HEK293 (cell line): ENCODE measurements at regions of chr16 and their contacts with region 1.

Region 1: DNA sequence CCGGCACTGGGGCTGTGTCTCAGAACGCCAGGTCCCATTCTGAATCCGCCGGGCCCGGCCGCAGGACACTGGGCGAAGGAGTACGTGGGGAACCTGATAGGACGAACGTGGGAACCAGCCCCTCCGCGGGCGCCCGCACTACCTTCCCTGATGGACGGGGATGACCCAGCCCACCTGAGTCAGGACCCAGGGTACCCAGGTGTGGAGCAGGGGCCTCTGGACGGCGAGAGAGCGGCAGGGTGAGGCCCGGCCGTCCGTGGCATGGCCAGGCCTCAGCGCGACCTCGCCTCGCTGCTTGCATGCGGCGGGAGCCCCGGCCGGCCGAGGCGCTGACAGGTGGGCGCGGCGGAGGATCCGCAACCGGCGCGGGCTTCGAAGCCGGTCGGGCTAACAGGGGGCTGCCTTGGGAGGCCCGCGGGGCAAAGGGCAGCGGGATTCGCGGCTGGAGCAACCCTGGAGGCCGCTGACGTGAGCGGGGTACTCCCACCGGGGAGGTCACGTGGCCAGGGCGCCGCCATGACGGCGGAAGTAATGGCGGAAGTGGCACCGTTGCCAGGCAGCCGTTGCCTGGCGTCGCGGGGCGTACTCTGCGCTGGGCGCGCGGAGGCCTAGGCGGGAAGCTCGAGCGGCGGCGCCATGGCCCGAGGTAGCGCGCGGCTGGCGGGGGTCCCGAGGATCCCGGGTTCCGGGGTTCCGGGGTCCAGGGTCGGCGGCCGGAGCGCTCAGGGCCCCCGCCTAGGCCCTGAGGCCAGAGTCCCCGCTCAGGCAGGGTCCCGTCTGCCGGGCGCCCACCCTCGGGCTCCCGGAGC is at the start of gene WDR90:
- H3K4me3 ChIP-seq: peak within 1 kb of the TSS; percentile 37
- H3K27ac ChIP-seq: peak within 1 kb of the TSS; percentile 97
- H3K4me1 ChIP-seq: 0 out of 2 replicates have a peak, but pooled peaks cover 5% of the 10 kb centered on the region
- CTCF ChIP-seq: no peak

Region 2: GRCh38 chr16:636206-637080 is 12.5 kb before region 1 on chr16 and contains the start of gene METTL26:
- CTCF ChIA-PET with region 1: interaction called, 5 read pairs
- POLR2A ChIA-PET with region 1: interaction called, 10 read pairs
- H3K4me3 ChIP-seq: peak within 1 kb of the TSS; percentile 87
- H3K27ac ChIP-seq: peak within 1 kb of the TSS; percentile 82
- H3K4me1 ChIP-seq: peaks cover 5% of the 10 kb centered on the region; the same call in 1 of the 2 replicates
- CTCF ChIP-seq: peak; percentile 79

Region 3: DNA sequence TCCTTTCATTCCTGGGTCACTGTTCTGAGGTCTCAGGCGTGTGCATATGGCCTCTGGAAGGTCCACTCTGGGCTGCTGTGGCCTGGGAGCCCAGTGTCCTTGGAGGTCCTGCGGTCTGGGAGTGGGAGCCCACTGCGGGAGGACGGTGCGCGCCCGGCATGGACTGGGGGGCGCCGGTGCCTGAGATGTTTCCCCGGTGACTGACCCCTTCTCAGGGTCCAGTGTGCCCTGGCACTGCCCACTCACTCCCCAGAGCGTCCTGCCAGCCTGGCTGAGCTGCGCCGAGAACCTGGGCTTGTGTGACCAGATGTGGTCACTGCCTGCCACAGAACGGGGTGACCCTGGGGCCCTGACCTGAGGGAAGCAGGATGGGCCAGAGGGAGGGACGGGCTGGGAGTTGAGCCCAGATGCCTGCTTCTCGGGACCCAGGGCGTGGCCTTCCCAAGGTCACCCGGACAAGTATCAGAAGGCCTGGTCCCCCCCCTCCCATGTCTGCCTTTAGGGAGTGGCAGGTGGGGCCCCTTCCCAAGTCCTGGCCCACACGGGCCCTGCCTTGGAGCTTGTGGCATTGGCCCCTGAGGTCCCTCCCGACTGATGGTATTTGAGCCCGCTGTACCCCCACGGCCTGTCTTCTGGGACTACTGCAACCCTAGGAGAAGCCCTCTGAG is 25.4 kb after region 1 on chr16:
- CTCF ChIA-PET with region 1: no interaction called
- POLR2A ChIA-PET with region 1: no interaction called
- H3K4me3 ChIP-seq: no peak overlapping the region
- H3K27ac ChIP-seq: no peak overlapping the region
- H3K4me1 ChIP-seq: peaks cover 5% of the 10 kb centered on the region; the same call in 1 of the 2 replicates
- CTCF ChIP-seq: no peak